Dorsolateral prefrontal cortex (tissue), 120 donors: ENCODE measurements at regions of chr4 and their contacts with region 1.

Region 1: GRCh38 chr4:41644288-41644914 is 104.1 kb downstream of the PHOX2B start:
- DNase-seq: peak; percentile 69 to 88 (median 81)
- H3K4me3 ChIP-seq: peak overlapping the region in 57 of 59 donors; percentile 0 to 59 (median 33)
- H3K27ac ChIP-seq: peak overlapping the region in 55 of 59 donors; percentile 9 to 87 (median 69)
- H3K27me3 ChIP-seq: no peaks in the 10 kb centered on the region
- CTCF ChIP-seq: peak; percentile 70 to 99 (median 96)

Region 2: GRCh38 chr4:41427306-41427882 is 217.0 kb before region 1 on chr4:
- intact Hi-C with region 1: loop called in 1 of 2 experiments (anchors 10 kb)
- DNase-seq: no peak
- H3K4me3 ChIP-seq: peak overlapping the region in 3 of 59 donors; percentile 7 to 15 (median 9)
- H3K27ac ChIP-seq: peak overlapping the region in 58 of 59 donors; percentile 7 to 89 (median 78)
- H3K27me3 ChIP-seq: no peaks in the 10 kb centered on the region
- CTCF ChIP-seq: no peak

Region 3: DNA sequence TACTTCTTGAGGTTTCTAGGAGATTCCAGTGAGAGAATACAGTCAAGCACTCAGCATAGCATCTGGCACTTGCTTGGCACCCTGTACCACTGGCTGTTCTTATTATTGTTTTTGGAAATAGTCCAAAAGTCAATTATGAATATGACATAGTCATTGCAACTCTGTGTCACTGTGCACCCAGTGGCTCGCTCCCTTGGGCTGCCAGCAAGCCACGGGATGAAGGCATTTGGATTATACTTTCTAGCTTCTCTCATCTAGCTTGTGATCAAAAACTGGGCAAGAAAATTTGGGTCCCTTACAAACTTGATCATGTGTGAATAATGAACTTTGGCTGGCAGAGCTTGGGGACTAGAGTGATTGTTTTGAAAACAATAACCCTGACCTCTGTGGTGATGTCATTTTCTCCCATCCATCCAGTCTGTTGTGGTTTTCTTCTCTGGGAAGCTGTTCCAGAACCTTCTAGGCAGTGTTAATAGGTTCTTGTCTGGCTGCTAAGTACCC is 139.2 kb before region 1 on chr4:
- intact Hi-C with region 1: loop called (anchors 10 kb)
- DNase-seq: peak in 2 of 10 donors; percentile 22 to 52
- H3K4me3 ChIP-seq: peak overlapping the region in 1 of 59 donors; percentile 14
- H3K27ac ChIP-seq: peak overlapping the region in 46 of 59 donors; percentile 4 to 78 (median 51)
- H3K27me3 ChIP-seq: no peaks in the 10 kb centered on the region
- CTCF ChIP-seq: no peak